ENCODE measurements at regions of chr3 and their contacts with region 1.

Region 1: GRCh38 chr3:114213627-114214541 is 23.5 kb downstream of the ZNF80 start:
- DNase-seq: peak; percentile 39 to 85 (median 59)
- ATAC-seq: peak; percentile 61 to 69 (median 66)
- H3K4me3 ChIP-seq: peak overlapping the region; percentile 49 to 52
- H3K4me3 Mint-ChIP-seq: no peak overlapping the region
- H3K27ac ChIP-seq: peak overlapping the region; percentile 95
- H3K27ac Mint-ChIP-seq: no peak overlapping the region
- H3K4me1 ChIP-seq: peaks cover 19 to 68% of the 10 kb centered on the region in 2 experiments
- H3K4me1 Mint-ChIP-seq: peaks cover 0 to 23% (median 2%) of the 10 kb centered on the region in 3 donors
- H3K27me3 ChIP-seq: no peaks in the 10 kb centered on the region
- H3K27me3 Mint-ChIP-seq: no peaks in the 10 kb centered on the region

Region 2: GRCh38 chr3:113668015-113668414 is 545.9 kb before region 1 on chr3:
- CTCF ChIA-PET with region 1: no interaction called
- POLR2A ChIA-PET with region 1: no interaction called
- DNase-seq: no peak
- ATAC-seq: no peak
- H3K4me3 ChIP-seq: no peak overlapping the region
- H3K4me3 Mint-ChIP-seq: no peak overlapping the region
- H3K27ac ChIP-seq: no peak overlapping the region
- H3K27ac Mint-ChIP-seq: peak overlapping the region in 1 of 2 donors; percentile 6
- H3K4me1 ChIP-seq: peaks cover 0 to 4% of the 10 kb centered on the region in 2 experiments
- H3K4me1 Mint-ChIP-seq: peaks cover 24 to 39% (median 28%) of the 10 kb centered on the region in 3 donors
- H3K27me3 ChIP-seq: no peaks in the 10 kb centered on the region
- H3K27me3 Mint-ChIP-seq: no peaks in the 10 kb centered on the region

Region 3: DNA sequence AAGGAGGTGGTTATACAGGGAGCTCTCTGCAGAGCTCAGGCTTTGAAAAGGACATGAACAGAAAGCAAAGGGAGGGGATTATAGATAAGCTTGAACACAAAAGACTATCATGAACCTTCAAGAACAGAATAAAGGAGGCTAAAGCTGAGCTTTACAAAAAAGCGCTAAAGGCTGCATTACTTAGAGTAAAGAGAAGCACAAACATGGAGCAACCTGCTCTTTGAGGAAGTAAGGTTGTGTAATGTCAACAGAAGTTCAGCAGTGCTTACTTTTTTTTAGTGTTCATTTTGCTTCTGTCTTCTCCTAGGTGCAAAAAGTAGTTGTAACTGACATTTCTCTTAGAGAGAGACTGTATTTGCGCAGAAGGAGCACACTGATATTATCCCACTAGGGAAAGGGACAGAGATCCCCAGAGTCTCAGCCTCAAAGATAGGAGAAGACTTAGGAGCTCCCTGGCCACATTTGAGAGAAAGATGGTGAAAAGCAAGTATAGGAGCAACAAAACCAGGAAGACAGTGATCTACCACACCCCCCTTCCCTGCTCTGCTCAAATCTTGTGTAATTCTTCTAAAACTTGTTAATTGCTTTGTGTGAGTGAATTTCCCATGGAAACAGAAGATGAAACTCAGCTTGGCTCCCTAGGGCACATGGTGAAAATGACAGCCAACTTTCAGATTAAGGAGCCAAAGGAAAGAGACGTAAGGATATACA is 102.7 kb before region 1 on chr3:
- CTCF ChIA-PET with region 1: no interaction called
- POLR2A ChIA-PET with region 1: no interaction called
- DNase-seq: no peak
- ATAC-seq: no peak
- H3K4me3 ChIP-seq: no peak overlapping the region
- H3K4me3 Mint-ChIP-seq: no peak overlapping the region
- H3K27ac ChIP-seq: no peak overlapping the region
- H3K27ac Mint-ChIP-seq: no peak overlapping the region
- H3K4me1 ChIP-seq: no peaks in the 10 kb centered on the region
- H3K4me1 Mint-ChIP-seq: no peaks in the 10 kb centered on the region
- H3K27me3 ChIP-seq: peaks cover 0 to 4% of the 10 kb centered on the region in 2 experiments
- H3K27me3 Mint-ChIP-seq: peaks cover 14% of the 10 kb centered on the region in 2 donors

Region 4: DNA sequence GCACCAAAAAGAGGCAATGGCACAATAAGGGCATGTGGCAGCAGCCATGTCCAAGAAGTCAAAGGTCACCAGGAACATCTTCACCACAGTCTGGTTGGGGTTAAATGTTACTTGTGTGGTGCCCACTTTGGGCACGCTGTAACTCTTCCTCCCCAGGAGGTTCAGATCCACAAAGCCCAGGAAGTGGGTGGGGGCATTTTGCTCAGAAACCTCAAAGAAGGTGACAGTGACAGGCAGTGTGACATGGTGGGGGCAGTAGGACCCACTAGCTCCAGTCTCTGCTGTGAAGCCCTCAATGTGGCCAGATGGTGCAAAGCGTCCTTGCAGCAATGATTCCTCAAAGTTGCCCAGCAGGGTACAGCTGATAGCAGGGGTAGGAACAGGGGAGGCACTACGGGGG is 17.7 kb after region 1 on chr3:
- CTCF ChIA-PET with region 1: interaction called, 5 to 15 read pairs
- POLR2A ChIA-PET with region 1: interaction called, 6 to 9 read pairs
- DNase-seq: peak; percentile 32 to 74 (median 54)
- ATAC-seq: peak; percentile 78 to 90 (median 88)
- H3K4me3 ChIP-seq: no peak overlapping the region
- H3K4me3 Mint-ChIP-seq: peak overlapping the region; percentile 46 to 64 (median 55)
- H3K27ac ChIP-seq: peak overlapping the region; percentile 76
- H3K27ac Mint-ChIP-seq: peak overlapping the region; percentile 93 to 95
- H3K4me1 ChIP-seq: peaks cover 10 to 59% of the 10 kb centered on the region in 2 experiments
- H3K4me1 Mint-ChIP-seq: peaks cover 77 to 90% (median 89%) of the 10 kb centered on the region in 3 donors
- H3K27me3 ChIP-seq: no peaks in the 10 kb centered on the region
- H3K27me3 Mint-ChIP-seq: no peaks in the 10 kb centered on the region

Region 5: DNA sequence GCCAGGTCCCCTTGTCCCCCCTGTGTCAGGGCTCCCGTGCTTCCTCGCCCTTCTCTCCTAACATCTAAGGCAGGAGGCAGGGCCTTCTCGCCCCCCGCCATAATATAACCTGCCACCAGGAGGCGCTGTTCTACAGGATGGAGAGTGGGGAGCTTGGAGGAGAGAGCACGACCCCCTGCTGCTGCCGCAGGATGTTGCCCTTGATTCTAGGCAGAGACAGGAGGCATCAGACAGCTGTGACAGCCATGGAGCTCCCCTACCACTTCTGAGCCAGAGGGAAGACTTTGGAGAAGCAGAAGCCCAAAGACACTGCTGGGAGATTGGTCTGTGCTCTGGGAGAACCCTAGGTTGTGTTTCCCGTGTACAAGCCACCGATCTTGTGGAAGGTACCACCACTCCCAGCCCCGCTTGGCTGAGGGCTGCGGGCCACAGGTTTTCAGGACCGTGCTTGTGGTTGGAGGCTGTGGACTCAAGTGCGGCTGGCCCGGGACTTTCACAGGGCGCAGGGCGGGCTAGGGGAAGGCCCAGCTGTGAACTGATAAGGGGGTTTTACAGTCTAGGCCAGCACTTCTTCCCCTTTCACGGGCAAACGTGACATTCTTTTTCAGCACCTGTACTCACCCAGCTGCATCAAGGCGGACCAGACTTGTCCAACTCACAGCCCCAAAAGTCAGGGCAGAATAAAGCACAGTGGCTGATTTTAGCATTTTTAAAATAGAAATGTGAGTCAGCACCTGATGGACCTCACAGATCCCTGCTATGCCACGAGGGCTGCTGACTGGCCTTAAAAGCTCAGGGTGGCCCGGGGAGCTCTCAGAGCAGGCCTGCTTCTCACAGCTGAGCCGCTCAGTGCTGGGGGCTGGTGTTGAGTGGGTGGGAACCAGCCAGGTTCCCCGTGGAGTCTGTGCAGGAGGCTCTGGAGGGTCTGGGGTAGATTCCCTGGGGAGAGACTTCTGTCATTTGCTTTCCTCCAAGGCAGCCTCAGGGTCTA is 77.3 kb after region 1 on chr3:
- CTCF ChIA-PET with region 1: interaction called, 4 to 21 read pairs
- POLR2A ChIA-PET with region 1: interaction called, 3 to 12 read pairs
- DNase-seq: peak; percentile 73 to 93 (median 89)
- ATAC-seq: peak; percentile 76 to 85 (median 81)
- H3K4me3 ChIP-seq: peak overlapping the region in 1 of 2 donors; percentile 37
- H3K4me3 Mint-ChIP-seq: peak overlapping the region; percentile 64 to 83 (median 78)
- H3K27ac ChIP-seq: peak overlapping the region; percentile 95
- H3K27ac Mint-ChIP-seq: peak overlapping the region; percentile 94
- H3K4me1 ChIP-seq: peaks cover 0 to 53% of the 10 kb centered on the region in 2 experiments
- H3K4me1 Mint-ChIP-seq: peaks cover 20 to 62% (median 52%) of the 10 kb centered on the region in 3 donors
- H3K27me3 ChIP-seq: no peaks in the 10 kb centered on the region
- H3K27me3 Mint-ChIP-seq: no peaks in the 10 kb centered on the region

Region 6: DNA sequence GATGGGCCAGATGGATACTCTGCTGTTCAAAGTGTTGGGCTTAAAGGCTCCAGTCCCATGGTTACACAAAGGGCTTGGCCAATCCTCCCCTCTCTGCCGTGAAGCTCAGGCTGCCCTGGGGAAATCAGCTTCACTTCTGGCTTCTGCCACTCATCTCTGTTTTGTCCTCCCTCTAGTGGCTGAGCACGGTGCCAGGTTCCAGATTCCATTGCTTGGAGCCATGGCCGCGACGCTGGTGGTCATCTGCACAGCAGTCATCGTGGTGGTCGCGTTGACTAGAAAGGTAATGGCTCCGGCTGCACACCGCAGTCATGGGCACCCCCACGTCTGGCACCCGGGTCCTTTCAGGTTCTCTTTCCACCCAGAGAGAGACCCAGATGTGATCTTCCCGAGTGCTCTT is 85.5 kb after region 1 on chr3:
- CTCF ChIA-PET with region 1: interaction called in 1 of 2 experiments, 10 read pairs
- POLR2A ChIA-PET with region 1: interaction called in 1 of 2 experiments, 12 read pairs
- DNase-seq: peak in 20 of 35 experiments; percentile 7 to 66 (median 28)
- ATAC-seq: peak in 3 of 4 experiments; percentile 46 to 70 (median 53)
- H3K4me3 ChIP-seq: peak overlapping the region in 1 of 2 donors; percentile 18
- H3K4me3 Mint-ChIP-seq: peak overlapping the region; percentile 40 to 72 (median 51)
- H3K27ac ChIP-seq: peak overlapping the region; percentile 36
- H3K27ac Mint-ChIP-seq: peak overlapping the region; percentile 70 to 74
- H3K4me1 ChIP-seq: peaks cover 0 to 49% of the 10 kb centered on the region in 2 experiments
- H3K4me1 Mint-ChIP-seq: peaks cover 19 to 54% (median 27%) of the 10 kb centered on the region in 3 donors
- H3K27me3 ChIP-seq: no peaks in the 10 kb centered on the region
- H3K27me3 Mint-ChIP-seq: no peaks in the 10 kb centered on the region

Region 7: GRCh38 chr3:114338651-114339357 is 124.9 kb after region 1 on chr3:
- CTCF ChIA-PET with region 1: interaction called, 3 read pairs
- POLR2A ChIA-PET with region 1: interaction called in 1 of 2 experiments, 11 read pairs
- DNase-seq: peak in 1 of 35 experiments; percentile 46
- ATAC-seq: no peak
- H3K4me3 ChIP-seq: no peak overlapping the region
- H3K4me3 Mint-ChIP-seq: peak overlapping the region in 1 of 3 donors; percentile 48
- H3K27ac ChIP-seq: peak overlapping the region; percentile 72
- H3K27ac Mint-ChIP-seq: peak overlapping the region; percentile 85 to 88
- H3K4me1 ChIP-seq: peaks cover 0 to 13% of the 10 kb centered on the region in 2 experiments
- H3K4me1 Mint-ChIP-seq: peaks cover 20 to 40% (median 36%) of the 10 kb centered on the region in 3 donors
- H3K27me3 ChIP-seq: no peaks in the 10 kb centered on the region
- H3K27me3 Mint-ChIP-seq: no peaks in the 10 kb centered on the region

Region 8: GRCh38 chr3:114411811-114412803 is 198.2 kb after region 1 on chr3:
- CTCF ChIA-PET with region 1: interaction called in 1 of 2 experiments, 10 read pairs
- POLR2A ChIA-PET with region 1: no interaction called
- DNase-seq: no peak
- ATAC-seq: no peak
- H3K4me3 ChIP-seq: no peak overlapping the region
- H3K4me3 Mint-ChIP-seq: no peak overlapping the region
- H3K27ac ChIP-seq: no peak overlapping the region
- H3K27ac Mint-ChIP-seq: no peak overlapping the region
- H3K4me1 ChIP-seq: peaks cover 0 to 2% of the 10 kb centered on the region in 2 experiments
- H3K4me1 Mint-ChIP-seq: peaks cover 3 to 27% (median 9%) of the 10 kb centered on the region in 3 donors
- H3K27me3 ChIP-seq: no peaks in the 10 kb centered on the region
- H3K27me3 Mint-ChIP-seq: no peaks in the 10 kb centered on the region

Measured in T-cell (primary cell).